CD4-positive, alpha-beta T cell (primary cell): ENCODE measurements at regions of chr12 and their contacts with region 1.

Region 1: GRCh38 chr12:47307680-47308399 is 228.1 kb upstream of the AMIGO2 start:
- DNase-seq: peak in 13 of 14 experiments; percentile 27 to 83 (median 48)
- ATAC-seq: peak; percentile 93
- H3K4me3 ChIP-seq: peak overlapping the region; percentile 62
- H3K4me3 Mint-ChIP-seq: peak overlapping the region; percentile 93
- H3K27ac ChIP-seq: peak overlapping the region; percentile 33 to 38
- H3K27ac Mint-ChIP-seq: peak overlapping the region; percentile 93
- H3K4me1 ChIP-seq: peaks cover 12% of the 10 kb centered on the region
- H3K4me1 Mint-ChIP-seq: peaks cover 29% of the 10 kb centered on the region
- H3K27me3 ChIP-seq: no peaks in the 10 kb centered on the region
- H3K27me3 Mint-ChIP-seq: no peaks in the 10 kb centered on the region
- CTCF ChIP-seq: peak; percentile 75

Region 2: GRCh38 chr12:46144433-46144832 is 1163.4 kb before region 1 on chr12:
- CTCF ChIA-PET with region 1: no interaction called
- POLR2A ChIA-PET with region 1: no interaction called
- intact Hi-C with region 1: no loop called
- DNase-seq: no peak
- ATAC-seq: no peak
- H3K4me3 ChIP-seq: no peak overlapping the region
- H3K4me3 Mint-ChIP-seq: no peak overlapping the region
- H3K27ac ChIP-seq: no peak overlapping the region
- H3K27ac Mint-ChIP-seq: no peak overlapping the region
- H3K4me1 ChIP-seq: no peaks in the 10 kb centered on the region
- H3K4me1 Mint-ChIP-seq: no peaks in the 10 kb centered on the region
- H3K27me3 ChIP-seq: no peaks in the 10 kb centered on the region
- H3K27me3 Mint-ChIP-seq: peaks cover 43% of the 10 kb centered on the region
- CTCF ChIP-seq: no peak

Region 3: DNA sequence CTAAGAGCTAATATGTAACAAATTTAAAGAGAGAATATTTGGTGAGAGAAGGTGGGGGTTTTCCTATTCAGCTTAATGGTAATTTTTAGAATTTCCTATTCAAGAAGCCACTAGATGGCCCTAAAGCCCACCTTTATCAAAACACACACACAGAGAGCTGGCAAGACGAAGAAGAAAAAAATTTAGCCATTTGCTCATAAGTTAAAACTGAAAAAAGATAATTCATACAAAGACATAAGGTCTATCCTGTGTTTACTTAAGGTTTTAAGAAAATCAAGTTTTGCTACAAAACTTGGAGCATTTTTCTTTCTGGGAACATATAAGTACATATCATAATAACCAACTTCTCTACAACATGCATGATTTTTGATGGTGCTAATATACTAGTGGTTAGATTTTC is 275.2 kb before region 1 on chr12:
- CTCF ChIA-PET with region 1: interaction called, 19 read pairs
- POLR2A ChIA-PET with region 1: interaction called, 7 read pairs
- intact Hi-C with region 1: loop called (anchors 1 kb)
- DNase-seq: peak in 7 of 14 experiments; percentile 2 to 80 (median 37)
- ATAC-seq: peak; percentile 83
- H3K4me3 ChIP-seq: no peak overlapping the region
- H3K4me3 Mint-ChIP-seq: no peak overlapping the region
- H3K27ac ChIP-seq: no peak overlapping the region
- H3K27ac Mint-ChIP-seq: no peak overlapping the region
- H3K4me1 ChIP-seq: peaks cover 2% of the 10 kb centered on the region
- H3K4me1 Mint-ChIP-seq: peaks cover 19% of the 10 kb centered on the region
- H3K27me3 ChIP-seq: no peaks in the 10 kb centered on the region
- H3K27me3 Mint-ChIP-seq: no peaks in the 10 kb centered on the region
- CTCF ChIP-seq: peak; percentile 64

Region 4: GRCh38 chr12:47190271-47190750 is 117.5 kb before region 1 on chr12:
- CTCF ChIA-PET with region 1: no interaction called
- POLR2A ChIA-PET with region 1: interaction called, 11 read pairs
- intact Hi-C with region 1: no loop called
- DNase-seq: peak in 1 of 14 experiments; percentile 37
- ATAC-seq: no peak
- H3K4me3 ChIP-seq: no peak overlapping the region
- H3K4me3 Mint-ChIP-seq: no peak overlapping the region
- H3K27ac ChIP-seq: peak overlapping the region; percentile 14 to 16
- H3K27ac Mint-ChIP-seq: peak overlapping the region; percentile 87
- H3K4me1 ChIP-seq: peaks cover 63% of the 10 kb centered on the region
- H3K4me1 Mint-ChIP-seq: peaks cover 90% of the 10 kb centered on the region
- H3K27me3 ChIP-seq: no peaks in the 10 kb centered on the region
- H3K27me3 Mint-ChIP-seq: no peaks in the 10 kb centered on the region
- CTCF ChIP-seq: no peak

Region 5: GRCh38 chr12:47216150-47216677 is 91.6 kb before region 1 on chr12:
- CTCF ChIA-PET with region 1: interaction called, 4 read pairs
- POLR2A ChIA-PET with region 1: interaction called, 26 read pairs
- intact Hi-C with region 1: loop called (anchors 5 kb)
- DNase-seq: peak; percentile 34 to 92 (median 64)
- ATAC-seq: peak; percentile 57
- H3K4me3 ChIP-seq: peak overlapping the region; percentile 71
- H3K4me3 Mint-ChIP-seq: peak overlapping the region; percentile 99
- H3K27ac ChIP-seq: peak overlapping the region; percentile 43 to 68
- H3K27ac Mint-ChIP-seq: peak overlapping the region; percentile 96
- H3K4me1 ChIP-seq: peaks cover 32% of the 10 kb centered on the region
- H3K4me1 Mint-ChIP-seq: peaks cover 78% of the 10 kb centered on the region
- H3K27me3 ChIP-seq: no peaks in the 10 kb centered on the region
- H3K27me3 Mint-ChIP-seq: no peaks in the 10 kb centered on the region
- CTCF ChIP-seq: no peak

Region 6: GRCh38 chr12:47270782-47271664 is 36.8 kb before region 1 on chr12:
- CTCF ChIA-PET with region 1: no interaction called
- POLR2A ChIA-PET with region 1: interaction called, 38 read pairs
- intact Hi-C with region 1: loop called in 1 of 2 experiments (anchors 2 kb)
- DNase-seq: peak in 1 of 14 experiments; percentile 27
- ATAC-seq: peak; percentile 79
- H3K4me3 ChIP-seq: no peak overlapping the region
- H3K4me3 Mint-ChIP-seq: peak overlapping the region; percentile 18
- H3K27ac ChIP-seq: no peak overlapping the region
- H3K27ac Mint-ChIP-seq: peak overlapping the region; percentile 66
- H3K4me1 ChIP-seq: peaks cover 44% of the 10 kb centered on the region
- H3K4me1 Mint-ChIP-seq: peaks cover 78% of the 10 kb centered on the region
- H3K27me3 ChIP-seq: no peaks in the 10 kb centered on the region
- H3K27me3 Mint-ChIP-seq: no peaks in the 10 kb centered on the region
- CTCF ChIP-seq: no peak

Region 7: DNA sequence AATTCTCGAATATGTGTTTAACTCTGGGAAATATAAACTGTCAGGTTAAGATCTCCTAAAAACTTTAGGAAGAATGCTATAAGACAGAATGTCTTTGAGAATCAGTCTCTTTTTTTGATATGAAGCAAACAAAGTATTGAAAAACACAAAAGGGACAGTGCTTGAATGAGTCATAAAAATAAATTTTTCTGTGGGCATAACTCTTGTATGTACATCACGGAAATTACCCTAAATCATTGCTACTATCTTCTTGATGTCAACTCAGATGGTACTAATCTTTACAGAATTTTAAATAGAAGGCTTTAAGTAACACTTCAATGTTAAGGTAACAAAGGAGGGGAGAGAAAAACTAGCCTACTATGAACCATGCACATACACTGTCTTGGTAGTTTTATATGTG is 16.0 kb after region 1 on chr12:
- CTCF ChIA-PET with region 1: no interaction called
- POLR2A ChIA-PET with region 1: no interaction called
- intact Hi-C with region 1: no loop called
- DNase-seq: no peak
- ATAC-seq: no peak
- H3K4me3 ChIP-seq: no peak overlapping the region
- H3K4me3 Mint-ChIP-seq: no peak overlapping the region
- H3K27ac ChIP-seq: no peak overlapping the region
- H3K27ac Mint-ChIP-seq: no peak overlapping the region
- H3K4me1 ChIP-seq: peaks cover 6% of the 10 kb centered on the region
- H3K4me1 Mint-ChIP-seq: peaks cover 23% of the 10 kb centered on the region
- H3K27me3 ChIP-seq: no peaks in the 10 kb centered on the region
- H3K27me3 Mint-ChIP-seq: no peaks in the 10 kb centered on the region
- CTCF ChIP-seq: no peak

Region 8: GRCh38 chr12:47361389-47362021 is 53.7 kb after region 1 on chr12:
- CTCF ChIA-PET with region 1: interaction called, 3 read pairs
- POLR2A ChIA-PET with region 1: interaction called, 16 read pairs
- intact Hi-C with region 1: no loop called
- DNase-seq: peak in 11 of 14 experiments; percentile 3 to 74 (median 37)
- ATAC-seq: peak; percentile 41
- H3K4me3 ChIP-seq: peak overlapping the region; percentile 40
- H3K4me3 Mint-ChIP-seq: peak overlapping the region; percentile 86
- H3K27ac ChIP-seq: peak overlapping the region; percentile 67 to 75
- H3K27ac Mint-ChIP-seq: peak overlapping the region; percentile 98
- H3K4me1 ChIP-seq: peaks cover 56% of the 10 kb centered on the region
- H3K4me1 Mint-ChIP-seq: peaks cover 65% of the 10 kb centered on the region
- H3K27me3 ChIP-seq: no peaks in the 10 kb centered on the region
- H3K27me3 Mint-ChIP-seq: no peaks in the 10 kb centered on the region
- CTCF ChIP-seq: no peak

Region 9: DNA sequence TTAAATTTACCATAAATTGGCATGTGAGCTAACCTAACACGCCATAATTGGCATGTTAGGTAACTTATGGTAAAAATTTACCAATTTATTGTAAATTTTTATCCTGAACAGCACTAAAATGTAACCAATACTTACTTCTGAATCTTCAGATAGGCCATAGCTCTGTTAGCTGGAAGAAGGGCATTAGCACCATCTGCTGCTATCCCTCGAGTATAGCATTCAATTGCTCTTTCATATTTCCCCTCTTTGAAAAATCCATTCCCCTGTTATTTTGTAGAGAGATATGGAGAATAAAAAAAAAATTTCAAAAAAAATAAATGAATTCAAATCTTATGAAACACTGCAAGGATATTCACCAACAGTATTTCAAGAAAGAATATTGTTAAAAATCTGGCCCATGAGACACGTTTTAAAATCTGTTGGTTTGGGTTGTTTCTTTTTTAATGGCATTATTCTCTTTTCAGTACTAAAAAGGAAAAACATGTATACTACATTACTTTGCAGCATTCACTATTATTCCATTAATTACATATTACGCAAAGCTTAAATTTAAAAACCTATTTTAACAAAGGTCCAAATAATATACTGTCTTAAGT is 378.9 kb after region 1 on chr12:
- CTCF ChIA-PET with region 1: no interaction called
- POLR2A ChIA-PET with region 1: no interaction called
- intact Hi-C with region 1: loop called in 1 of 2 experiments (anchors 10 kb)
- DNase-seq: peak in 6 of 14 experiments; percentile 1 to 61 (median 31)
- ATAC-seq: peak; percentile 76
- H3K4me3 ChIP-seq: no peak overlapping the region
- H3K4me3 Mint-ChIP-seq: no peak overlapping the region
- H3K27ac ChIP-seq: no peak overlapping the region
- H3K27ac Mint-ChIP-seq: no peak overlapping the region
- H3K4me1 ChIP-seq: no peaks in the 10 kb centered on the region
- H3K4me1 Mint-ChIP-seq: peaks cover 10% of the 10 kb centered on the region
- H3K27me3 ChIP-seq: no peaks in the 10 kb centered on the region
- H3K27me3 Mint-ChIP-seq: no peaks in the 10 kb centered on the region
- CTCF ChIP-seq: peak; percentile 58

Region 10: DNA sequence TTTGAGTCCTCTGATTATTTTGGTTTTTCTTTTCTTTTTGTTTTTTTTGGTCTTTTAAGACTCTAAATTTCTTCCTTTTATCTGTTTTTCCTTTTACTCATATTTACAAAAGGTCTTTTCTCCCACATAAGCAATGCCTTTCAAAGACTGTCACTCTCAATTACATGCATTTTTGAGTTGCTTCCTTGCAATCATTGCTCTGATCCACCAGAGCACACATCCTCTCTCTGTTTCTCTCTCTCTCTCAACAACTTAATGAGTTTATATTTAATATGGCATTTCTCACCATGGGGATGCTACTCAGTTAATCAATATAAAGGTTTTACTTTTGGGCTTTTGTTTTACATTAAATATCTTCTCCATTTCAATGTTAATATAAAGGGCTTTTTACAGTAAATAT is 957.9 kb after region 1 on chr12:
- CTCF ChIA-PET with region 1: no interaction called
- POLR2A ChIA-PET with region 1: no interaction called
- intact Hi-C with region 1: no loop called
- DNase-seq: no peak
- ATAC-seq: no peak
- H3K4me3 ChIP-seq: no peak overlapping the region
- H3K4me3 Mint-ChIP-seq: no peak overlapping the region
- H3K27ac ChIP-seq: no peak overlapping the region
- H3K27ac Mint-ChIP-seq: no peak overlapping the region
- H3K4me1 ChIP-seq: no peaks in the 10 kb centered on the region
- H3K4me1 Mint-ChIP-seq: no peaks in the 10 kb centered on the region
- H3K27me3 ChIP-seq: no peaks in the 10 kb centered on the region
- H3K27me3 Mint-ChIP-seq: peaks cover 27% of the 10 kb centered on the region
- CTCF ChIP-seq: no peak